Activated CD8-positive, alpha-beta memory T cell treated with anti-CD3 and anti-CD28 coated beads, Interleukin-2, amount 10 ng/mL, durations not matched to agents 7 days and 5 days (primary cell): ENCODE measurements at regions of chr7 and their contacts with region 1.

Region 1: DNA sequence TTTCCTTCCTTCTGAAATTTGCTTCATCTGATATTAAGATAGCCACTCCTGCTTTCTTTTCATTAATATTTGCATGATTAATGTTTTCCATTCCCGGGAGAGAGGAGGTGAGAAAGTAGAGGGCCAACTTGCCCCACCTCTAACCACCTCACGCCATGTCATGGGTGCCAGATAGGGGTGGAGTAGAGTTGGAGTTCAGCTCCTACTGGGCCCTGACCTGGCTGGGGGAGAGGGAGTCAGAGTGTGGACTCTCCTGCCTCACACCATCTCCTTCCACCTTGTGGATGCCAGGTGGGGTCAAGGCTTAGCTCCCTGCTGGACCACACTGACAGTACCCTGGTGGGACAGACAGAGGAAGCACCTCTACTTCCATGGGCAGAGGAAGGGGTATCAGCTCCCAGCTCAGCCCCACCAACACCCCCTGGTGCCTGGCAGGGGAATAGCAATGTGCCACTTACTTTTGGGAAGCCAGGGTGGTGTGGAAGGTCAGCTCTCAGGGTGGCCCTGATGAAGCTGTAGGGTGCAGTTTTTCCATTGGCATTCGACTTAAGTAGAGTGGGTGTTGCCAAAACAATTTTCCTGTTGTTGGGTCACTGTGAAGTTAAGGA is 28.0 kb downstream of the CHST12 start:
- DNase-seq: peak; percentile 56
- ATAC-seq: peak; percentile 79
- H3K4me3 Mint-ChIP-seq: no peak overlapping the region
- H3K27ac Mint-ChIP-seq: no peak overlapping the region
- H3K4me1 Mint-ChIP-seq: peaks cover 28% of the 10 kb centered on the region
- H3K27me3 Mint-ChIP-seq: no peaks in the 10 kb centered on the region

Region 2: GRCh38 chr7:2373124-2373556 is 58.2 kb before region 1 on chr7:
- CTCF ChIA-PET with region 1: no interaction called
- DNase-seq: no peak
- ATAC-seq: no peak
- H3K4me3 Mint-ChIP-seq: no peak overlapping the region
- H3K27ac Mint-ChIP-seq: no peak overlapping the region
- H3K4me1 Mint-ChIP-seq: peaks cover 6% of the 10 kb centered on the region
- H3K27me3 Mint-ChIP-seq: no peaks in the 10 kb centered on the region

Region 3: GRCh38 chr7:2384354-2385243 is 46.8 kb before region 1 on chr7:
- CTCF ChIA-PET with region 1: interaction called, 10 read pairs
- DNase-seq: no peak
- ATAC-seq: peak; percentile 35
- H3K4me3 Mint-ChIP-seq: no peak overlapping the region
- H3K27ac Mint-ChIP-seq: no peak overlapping the region
- H3K4me1 Mint-ChIP-seq: no peaks in the 10 kb centered on the region
- H3K27me3 Mint-ChIP-seq: no peaks in the 10 kb centered on the region

Region 4: DNA sequence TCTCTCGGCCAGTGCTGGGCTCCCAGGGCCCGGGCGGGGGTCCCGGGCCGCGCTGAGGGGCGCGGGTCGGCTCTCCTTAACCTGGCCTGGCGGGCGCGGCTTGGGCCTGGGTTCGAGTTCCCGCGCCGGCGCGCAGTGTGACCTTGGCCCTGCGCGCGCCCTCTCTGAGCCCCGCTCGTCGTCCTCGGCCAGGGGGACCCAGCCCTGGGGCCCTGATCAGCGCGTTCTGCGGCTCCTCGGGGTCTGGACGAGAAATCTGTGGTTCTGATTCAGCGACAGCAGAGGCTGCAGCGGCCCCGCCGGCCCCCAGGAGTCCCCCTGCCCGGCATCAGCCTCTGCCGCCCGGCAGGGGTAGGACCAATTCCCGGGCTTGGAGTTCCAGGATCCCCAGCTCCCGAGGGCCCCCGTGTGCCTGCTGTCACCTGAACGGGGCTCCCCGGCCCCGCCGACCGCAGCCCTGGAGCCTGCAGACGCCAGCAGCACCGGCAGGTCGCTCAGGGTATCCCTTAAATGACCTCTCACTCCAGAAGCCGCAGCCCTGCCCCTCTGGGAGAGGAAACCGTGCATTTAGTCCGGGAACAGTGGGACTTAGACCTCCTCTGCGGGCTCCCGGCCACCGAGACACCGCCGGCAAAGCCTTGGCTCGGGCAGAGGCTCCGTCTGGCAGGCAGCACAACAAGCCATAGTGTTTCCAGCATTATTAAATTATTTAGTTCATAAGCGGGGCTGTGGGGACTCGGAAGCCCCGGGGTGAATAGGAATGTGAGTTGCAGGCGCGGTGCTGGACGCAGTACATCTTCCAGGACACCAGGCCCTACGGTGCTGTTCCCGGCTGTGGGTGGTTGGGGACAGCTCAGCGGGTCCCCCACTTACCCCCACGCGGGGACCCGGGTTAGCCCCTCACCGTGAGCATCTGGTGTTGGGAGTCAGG is 27.4 kb before region 1 on chr7:
- CTCF ChIA-PET with region 1: interaction called, 29 read pairs
- DNase-seq: peak; percentile 62
- ATAC-seq: peak; percentile 16
- H3K4me3 Mint-ChIP-seq: peak overlapping the region; percentile 84
- H3K27ac Mint-ChIP-seq: peak overlapping the region; percentile 99
- H3K4me1 Mint-ChIP-seq: peaks cover 59% of the 10 kb centered on the region
- H3K27me3 Mint-ChIP-seq: no peaks in the 10 kb centered on the region